Brain microvascular endothelial cell (primary cell): ENCODE measurements at regions of chr2 and their contacts with region 1.

Region 1: GRCh38 chr2:173210270-173211196 is 134.9 kb downstream of the MAP3K20 start:
- DNase-seq: peak; percentile 91
- H3K4me3 ChIP-seq: no peak overlapping the region
- H3K27ac ChIP-seq: peak overlapping the region; percentile 64
- H3K27me3 ChIP-seq: no peaks in the 10 kb centered on the region
- CTCF ChIP-seq: peak; percentile 89

Region 2: DNA sequence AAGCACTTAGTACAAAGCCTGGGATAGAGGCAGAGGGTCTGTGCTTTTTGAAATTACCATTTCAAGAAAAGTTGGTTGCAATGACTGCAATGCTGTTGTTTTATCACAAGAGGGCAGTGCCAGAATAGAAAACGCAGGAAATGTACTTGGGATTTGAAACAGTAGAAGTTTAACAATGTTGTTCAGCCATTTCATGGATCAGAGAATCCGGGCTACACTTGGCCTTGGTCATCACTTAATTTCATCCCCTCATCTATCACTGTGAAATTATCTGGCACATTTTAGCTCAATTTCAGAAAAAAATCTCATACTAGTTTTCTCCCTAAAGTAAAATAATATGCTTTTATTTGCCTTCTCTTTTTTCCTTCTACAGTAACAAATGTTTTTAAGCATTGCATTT is 404.0 kb before region 1 on chr2:
- in situ Hi-C with region 1: loop called (anchors 25 kb)
- DNase-seq: peak; percentile 36
- H3K4me3 ChIP-seq: no peak overlapping the region
- H3K27ac ChIP-seq: no peak overlapping the region
- H3K27me3 ChIP-seq: no peaks in the 10 kb centered on the region
- CTCF ChIP-seq: peak; percentile 78

Region 3: DNA sequence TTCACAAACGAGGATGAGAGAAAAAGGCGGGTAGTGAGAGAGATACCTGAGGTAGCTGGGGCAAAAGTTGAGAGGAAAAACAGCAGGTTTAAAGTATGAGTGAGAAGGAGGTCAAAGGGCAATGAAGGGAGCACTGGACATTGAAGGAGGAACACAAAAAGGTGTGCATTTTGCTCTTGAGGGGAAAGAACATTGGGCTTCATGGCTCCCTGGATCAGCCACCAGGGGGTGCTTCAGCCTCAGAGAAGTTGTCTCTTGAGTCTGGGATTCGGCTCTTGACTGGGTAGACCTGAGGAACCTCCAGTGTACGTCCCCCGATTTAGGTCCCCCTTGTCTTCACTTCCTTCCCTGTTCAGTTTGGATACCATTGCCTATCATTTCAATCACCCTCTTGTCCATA is 346.4 kb before region 1 on chr2:
- in situ Hi-C with region 1: no loop called
- DNase-seq: peak; percentile 36
- H3K4me3 ChIP-seq: no peak overlapping the region
- H3K27ac ChIP-seq: no peak overlapping the region
- H3K27me3 ChIP-seq: no peaks in the 10 kb centered on the region
- CTCF ChIP-seq: peak; percentile 87

Region 4: DNA sequence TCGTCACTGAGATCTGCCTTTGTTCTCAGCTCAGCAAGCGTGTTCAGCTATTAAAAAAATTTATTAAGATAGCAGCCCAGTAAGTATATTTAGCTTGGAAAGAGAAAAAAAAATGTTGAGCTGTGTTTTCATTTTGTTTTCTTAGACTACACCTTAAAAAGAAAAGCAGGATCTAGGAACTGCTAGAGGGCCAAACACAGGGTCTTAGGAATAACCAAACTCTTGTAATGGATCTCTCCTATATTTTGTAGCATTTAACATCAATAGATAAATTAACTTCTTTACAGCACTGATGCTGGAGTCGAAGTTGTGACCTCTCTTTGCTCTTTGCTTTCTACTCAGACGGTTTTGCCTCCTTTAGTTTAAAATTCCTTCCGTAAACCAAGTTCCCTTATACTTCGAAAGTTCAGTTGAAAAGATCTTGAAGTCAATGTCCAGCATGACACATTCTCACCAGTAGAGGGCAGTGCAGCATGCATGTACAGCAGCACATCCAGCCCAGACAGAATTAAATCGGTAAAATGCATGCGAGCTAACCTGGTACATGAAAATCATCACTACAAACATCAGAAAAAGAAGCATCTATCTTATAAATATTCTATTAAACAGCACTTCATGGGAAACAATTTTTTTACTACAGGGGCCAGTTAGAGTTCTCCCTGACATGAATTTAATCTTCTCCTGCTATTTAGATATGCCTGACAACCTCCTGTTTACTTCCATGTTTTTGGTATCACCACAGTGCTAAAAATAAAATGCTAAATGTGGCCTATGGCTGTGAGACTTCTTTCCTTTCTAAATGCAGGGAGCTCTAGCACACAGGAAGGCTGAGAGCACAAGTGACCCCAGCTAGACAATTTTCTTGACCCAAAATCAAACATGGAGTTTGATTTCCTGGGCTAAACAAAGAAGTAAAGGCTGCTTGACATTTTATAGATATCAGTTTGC is 183.1 kb before region 1 on chr2:
- in situ Hi-C with region 1: loop called (anchors 25 kb)
- DNase-seq: peak; percentile 89
- H3K4me3 ChIP-seq: no peak overlapping the region
- H3K27ac ChIP-seq: no peak overlapping the region
- H3K27me3 ChIP-seq: no peaks in the 10 kb centered on the region
- CTCF ChIP-seq: peak; percentile 89

Region 5: DNA sequence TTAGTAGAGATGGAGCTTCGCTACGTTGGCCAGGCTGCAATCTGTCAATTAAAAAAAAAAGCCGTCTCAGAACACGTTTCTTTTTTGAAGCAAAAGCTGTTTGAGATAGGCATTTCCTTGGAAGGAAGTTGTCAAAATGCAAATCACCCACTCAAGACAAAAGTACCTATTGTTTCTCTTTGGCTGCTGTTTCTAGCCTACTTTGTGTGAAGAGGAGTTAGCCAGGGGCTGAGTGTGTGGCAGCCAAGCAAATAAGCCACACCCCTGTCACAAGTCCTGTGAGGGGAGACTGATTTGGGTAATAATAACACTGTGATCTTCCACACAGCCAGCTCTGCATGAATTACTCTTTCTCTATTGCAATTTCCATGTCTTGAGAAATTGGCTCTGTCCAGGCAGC is 96.8 kb after region 1 on chr2:
- in situ Hi-C with region 1: no loop called
- DNase-seq: no peak
- H3K4me3 ChIP-seq: no peak overlapping the region
- H3K27ac ChIP-seq: no peak overlapping the region
- H3K27me3 ChIP-seq: no peaks in the 10 kb centered on the region
- CTCF ChIP-seq: no peak